Activated CD4-positive, alpha-beta memory T cell treated with anti-CD3 and anti-CD28 coated beads for 36 hours (primary cell): ENCODE measurements at regions of chr2 and their contacts with region 1.

Region 1: GRCh38 chr2:96856776-96857673 is 791 bp downstream of the ANKRD39 start:
- DNase-seq: peak; percentile 65
- H3K4me3 Mint-ChIP-seq: peak overlapping the region; percentile 93
- H3K27ac Mint-ChIP-seq: peak overlapping the region; percentile 84
- H3K4me1 Mint-ChIP-seq: peaks cover 42% of the 10 kb centered on the region
- H3K27me3 Mint-ChIP-seq: no peaks in the 10 kb centered on the region

Region 2: GRCh38 chr2:96816128-96816835 is 40.7 kb before region 1 on chr2 and contains the start of gene CNNM3:
- CTCF ChIA-PET with region 1: interaction called, 14 read pairs
- POLR2A ChIA-PET with region 1: interaction called, 17 read pairs
- intact Hi-C with region 1: loop called (anchors 5 kb)
- DNase-seq: peak; percentile 97
- H3K4me3 Mint-ChIP-seq: peak within 1 kb of the TSS; percentile 82
- H3K27ac Mint-ChIP-seq: peak within 1 kb of the TSS; percentile 77
- H3K4me1 Mint-ChIP-seq: peaks cover 60% of the 10 kb centered on the region
- H3K27me3 Mint-ChIP-seq: no peaks in the 10 kb centered on the region
- total RNA-seq, gene CNNM3: 16.3 to 22.2 TPM

Region 3: DNA sequence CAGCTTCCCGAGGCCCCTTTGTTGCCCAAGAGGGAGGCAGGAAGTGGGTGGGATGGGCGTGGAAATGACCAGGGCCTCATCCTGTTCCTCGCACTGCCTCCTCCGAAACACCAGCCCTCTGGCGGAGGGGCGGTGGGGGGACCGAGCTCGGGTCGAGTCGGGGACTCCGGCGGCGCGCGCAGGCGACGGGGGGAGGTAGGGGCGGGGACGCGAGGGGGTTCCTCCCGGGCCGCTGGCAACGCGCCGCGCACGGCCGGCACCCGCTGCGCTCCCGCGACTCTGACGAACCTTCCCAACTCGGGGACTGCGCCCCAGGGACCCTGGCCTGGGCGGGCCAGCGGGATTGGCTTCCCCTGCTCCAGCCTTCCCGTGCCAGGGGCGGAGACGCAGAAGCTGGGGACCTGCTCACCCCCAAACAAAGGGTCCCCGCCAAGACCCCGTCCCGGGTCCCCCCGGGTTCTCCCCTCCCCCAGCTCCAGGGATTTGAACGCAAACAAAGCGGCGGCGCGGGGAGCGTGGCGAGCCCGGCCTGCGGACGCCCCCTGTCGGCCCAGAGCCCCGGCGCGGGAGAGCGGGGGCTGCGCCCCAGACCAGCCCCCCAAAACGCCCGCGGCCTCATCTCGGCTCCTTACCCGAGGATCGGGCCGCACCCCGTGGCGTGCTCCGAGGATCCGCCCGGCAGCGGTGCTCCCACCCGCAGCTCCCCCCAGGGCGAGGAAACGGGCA is 11.7 kb after region 1 on chr2:
- CTCF ChIA-PET with region 1: interaction called, 72 read pairs
- POLR2A ChIA-PET with region 1: interaction called, 21 read pairs
- intact Hi-C with region 1: no loop called
- DNase-seq: peak; percentile 81
- H3K4me3 Mint-ChIP-seq: peak overlapping the region; percentile 79
- H3K27ac Mint-ChIP-seq: peak overlapping the region; percentile 76
- H3K4me1 Mint-ChIP-seq: peaks cover 35% of the 10 kb centered on the region
- H3K27me3 Mint-ChIP-seq: peaks cover 2% of the 10 kb centered on the region

Region 4: GRCh38 chr2:96891491-96892333 is 34.7 kb after region 1 on chr2:
- CTCF ChIA-PET with region 1: interaction called, 11 read pairs
- POLR2A ChIA-PET with region 1: interaction called, 3 read pairs
- intact Hi-C with region 1: no loop called
- DNase-seq: peak; percentile 29
- H3K4me3 Mint-ChIP-seq: no peak overlapping the region
- H3K27ac Mint-ChIP-seq: no peak overlapping the region
- H3K4me1 Mint-ChIP-seq: peaks cover 42% of the 10 kb centered on the region
- H3K27me3 Mint-ChIP-seq: no peaks in the 10 kb centered on the region

Region 5: GRCh38 chr2:96940001-96940615 is 83.1 kb after region 1 on chr2:
- CTCF ChIA-PET with region 1: interaction called, 19 read pairs
- POLR2A ChIA-PET with region 1: no interaction called
- intact Hi-C with region 1: no loop called
- DNase-seq: no peak
- H3K4me3 Mint-ChIP-seq: no peak overlapping the region
- H3K27ac Mint-ChIP-seq: no peak overlapping the region
- H3K4me1 Mint-ChIP-seq: peaks cover 23% of the 10 kb centered on the region
- H3K27me3 Mint-ChIP-seq: no peaks in the 10 kb centered on the region

Region 6: DNA sequence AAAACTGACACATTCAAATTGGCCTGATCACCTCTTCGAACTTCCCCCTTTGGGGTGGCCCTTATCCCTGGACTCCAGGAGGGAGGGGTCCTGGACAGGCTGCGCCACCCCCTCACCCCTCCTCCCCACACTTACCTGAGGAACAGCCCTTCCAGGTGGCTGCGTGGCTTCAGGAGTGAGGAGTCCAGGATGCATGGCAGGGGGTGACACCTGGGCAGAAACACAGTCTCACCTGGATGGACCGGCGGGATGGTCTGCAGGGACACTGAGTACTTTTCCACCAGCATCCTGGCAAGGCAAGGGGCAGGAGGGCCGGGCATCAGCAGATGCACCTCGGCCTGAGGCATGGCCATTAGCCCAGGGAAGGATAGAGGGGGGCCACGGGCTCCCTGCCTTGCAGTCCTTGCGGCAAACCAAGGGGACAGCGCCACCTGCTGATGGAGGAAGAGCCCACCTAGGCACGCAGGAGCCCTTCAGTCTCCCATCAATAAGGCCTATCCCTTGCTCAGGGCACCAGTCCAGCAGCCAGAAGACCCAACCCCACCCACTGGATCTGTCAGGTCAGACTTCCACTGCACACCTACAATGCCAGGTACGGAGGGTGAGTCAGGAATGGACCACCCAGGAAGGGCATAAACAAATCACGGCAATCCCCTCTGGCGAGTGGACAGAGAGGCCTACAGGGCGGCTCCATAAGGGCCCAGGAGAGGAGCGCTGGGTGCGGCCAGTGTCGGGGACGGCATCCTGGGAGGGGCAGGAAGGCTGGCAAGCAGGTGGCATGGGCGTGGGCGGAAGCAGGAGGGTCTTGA is 103.3 kb after region 1 on chr2:
- CTCF ChIA-PET with region 1: interaction called, 192 read pairs
- POLR2A ChIA-PET with region 1: interaction called, 9 read pairs
- intact Hi-C with region 1: loop called (anchors 1 kb)
- DNase-seq: peak; percentile 89
- H3K4me3 Mint-ChIP-seq: no peak overlapping the region
- H3K27ac Mint-ChIP-seq: no peak overlapping the region
- H3K4me1 Mint-ChIP-seq: peaks cover 50% of the 10 kb centered on the region
- H3K27me3 Mint-ChIP-seq: no peaks in the 10 kb centered on the region